Transverse colon (tissue), 4 donors: ENCODE measurements at regions of chr18 and their contacts with region 1.

Region 1: GRCh38 chr18:77207540-77207939 is 42.1 kb upstream of the GALR1 start:
- DNase-seq: peak; percentile 32
- H3K4me3 ChIP-seq: no peak overlapping the region
- H3K27ac ChIP-seq: peak overlapping the region; percentile 44 to 69 (median 67)
- H3K4me1 ChIP-seq: peaks cover 0 to 34% (median 5%) of the 10 kb centered on the region in 4 donors
- H3K27me3 ChIP-seq: no peaks in the 10 kb centered on the region
- CTCF ChIP-seq: peak in 4 of 5 experiments; percentile 41 to 47 (median 46)
- EP300 ChIP-seq: no peak
- POLR2A ChIP-seq: no peak

Region 2: GRCh38 chr18:76991021-76991688 is 216.4 kb before region 1 on chr18:
- in situ Hi-C with region 1: loop called in 3 of 4 experiments (anchors 10 to 25 kb)
- intact Hi-C with region 1: loop called (anchors 5 kb)
- DNase-seq: no peak
- H3K4me3 ChIP-seq: no peak overlapping the region
- H3K27ac ChIP-seq: no peak overlapping the region
- H3K4me1 ChIP-seq: no peaks in the 10 kb centered on the region
- H3K27me3 ChIP-seq: no peaks in the 10 kb centered on the region
- CTCF ChIP-seq: no peak
- EP300 ChIP-seq: no peak
- POLR2A ChIP-seq: no peak

Region 3: GRCh38 chr18:77006305-77007175 is 201.0 kb before region 1 on chr18:
- in situ Hi-C with region 1: no loop called
- intact Hi-C with region 1: no loop called
- DNase-seq: no peak
- H3K4me3 ChIP-seq: no peak overlapping the region
- H3K27ac ChIP-seq: peak overlapping the region; percentile 8 to 42 (median 30)
- H3K4me1 ChIP-seq: no peaks in the 10 kb centered on the region
- H3K27me3 ChIP-seq: no peaks in the 10 kb centered on the region
- CTCF ChIP-seq: no peak
- EP300 ChIP-seq: no peak
- POLR2A ChIP-seq: no peak

Region 4: GRCh38 chr18:77071711-77072292 is 135.7 kb before region 1 on chr18:
- in situ Hi-C with region 1: no loop called
- intact Hi-C with region 1: no loop called
- DNase-seq: no peak
- H3K4me3 ChIP-seq: no peak overlapping the region
- H3K27ac ChIP-seq: peak overlapping the region; percentile 26 to 50 (median 40)
- H3K4me1 ChIP-seq: peaks cover 12 to 42% (median 16%) of the 10 kb centered on the region in 4 donors
- H3K27me3 ChIP-seq: no peaks in the 10 kb centered on the region
- CTCF ChIP-seq: no peak
- EP300 ChIP-seq: no peak
- POLR2A ChIP-seq: no peak